Right lobe of liver (tissue), 6 donors: ENCODE measurements at regions of chr10 and their contacts with region 1.

Region 1: DNA sequence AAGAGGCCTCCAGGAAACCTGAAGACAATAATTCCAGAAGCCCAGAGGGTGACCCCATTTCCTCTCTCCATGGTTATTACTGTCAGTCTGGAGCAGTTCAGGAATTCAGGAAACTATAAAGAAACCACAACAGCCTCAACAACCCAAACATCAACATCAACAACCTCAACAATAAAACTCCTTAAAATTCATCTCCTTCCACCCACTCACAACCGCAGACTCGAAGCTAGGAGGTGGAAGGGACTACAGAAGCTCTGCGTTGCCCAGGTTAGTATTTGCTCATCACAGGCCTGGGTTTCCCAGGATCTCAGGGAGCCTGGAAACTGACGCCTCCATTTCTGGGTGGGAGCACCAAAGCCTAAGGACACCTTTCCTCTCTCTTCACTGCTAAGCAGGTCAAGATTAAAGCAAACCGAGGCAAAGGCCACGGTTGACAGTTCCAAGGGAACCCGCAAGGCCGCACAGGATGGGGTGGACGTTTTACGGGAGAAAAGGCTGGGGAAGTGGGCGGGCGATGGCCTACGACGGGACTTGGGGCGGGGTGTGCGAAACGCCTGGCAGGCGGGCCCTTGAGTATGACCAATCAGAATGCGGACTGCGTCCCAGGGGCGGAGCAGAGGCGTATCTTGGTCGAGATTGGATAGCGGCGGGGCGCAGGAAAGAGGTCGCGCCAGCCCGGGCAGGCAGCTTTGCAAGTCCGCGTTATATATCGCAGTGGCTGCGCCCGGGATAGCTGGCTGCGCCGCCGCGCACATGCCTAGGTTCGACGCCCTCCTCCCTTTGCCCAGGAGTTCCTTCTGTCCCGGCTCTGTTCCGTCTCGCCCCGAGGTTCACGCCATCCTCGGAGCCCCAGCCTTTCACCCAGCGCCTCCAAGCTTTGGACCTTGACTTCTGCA is at the start of gene ELOVL3:
- DNase-seq: peak; percentile 90 to 92 (median 91)
- ATAC-seq: peak; percentile 91 to 96 (median 94)
- H3K4me3 ChIP-seq: peak within 1 kb of the TSS in 2 of 3 donors; percentile 14 to 39
- H3K27ac ChIP-seq: peak within 1 kb of the TSS in 2 of 3 donors; percentile 24 to 48
- H3K4me1 ChIP-seq: peaks cover 0 to 10% (median 5%) of the 10 kb centered on the region in 4 donors
- H3K27me3 ChIP-seq: peaks cover 0 to 8% of the 10 kb centered on the region in 2 donors
- CTCF ChIP-seq: no peak
- POLR2A ChIP-seq: no peak
- total RNA-seq, gene ELOVL3: not detected

Region 2: DNA sequence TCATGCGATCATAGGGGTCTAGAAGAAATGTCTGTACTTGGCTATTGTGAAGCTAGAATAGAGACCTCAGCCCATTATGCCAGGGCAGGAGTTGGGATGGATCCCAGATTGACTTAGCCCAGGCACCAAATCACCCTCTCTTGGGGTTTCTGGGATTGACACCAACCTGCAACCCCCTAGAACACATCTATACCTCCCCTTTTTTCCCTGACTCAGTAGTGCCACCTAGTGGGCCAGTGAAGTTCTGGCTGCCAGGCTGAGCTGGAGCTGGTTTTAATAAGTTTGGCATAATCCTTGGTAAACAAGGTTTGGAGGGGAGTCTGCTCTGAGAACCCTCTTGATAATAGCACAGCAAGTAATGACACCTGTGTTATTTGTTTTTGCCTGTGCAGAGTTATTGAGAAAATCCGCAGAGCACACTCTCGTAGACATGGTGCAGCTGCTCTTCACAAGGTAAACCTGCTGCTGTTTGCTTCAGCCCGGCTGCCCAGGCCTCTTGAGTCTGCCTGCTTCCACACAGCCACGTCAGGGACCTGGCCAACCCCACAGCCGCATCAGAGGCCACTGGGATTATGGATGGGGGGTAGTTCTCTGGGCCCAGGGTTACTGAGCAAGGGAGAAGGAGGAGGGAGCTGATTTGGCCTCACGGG is 126.3 kb after region 1 on chr10:
- intact Hi-C with region 1: loop called in 1 of 2 experiments (anchors 5 kb)
- DNase-seq: peak in 2 of 3 donors; percentile 47 to 53
- ATAC-seq: peak; percentile 69 to 77 (median 74)
- H3K4me3 ChIP-seq: no peak overlapping the region
- H3K27ac ChIP-seq: no peak overlapping the region
- H3K4me1 ChIP-seq: no peaks in the 10 kb centered on the region
- H3K27me3 ChIP-seq: no peaks in the 10 kb centered on the region
- CTCF ChIP-seq: peak; percentile 80 to 91 (median 88)
- POLR2A ChIP-seq: no peak

Region 3: DNA sequence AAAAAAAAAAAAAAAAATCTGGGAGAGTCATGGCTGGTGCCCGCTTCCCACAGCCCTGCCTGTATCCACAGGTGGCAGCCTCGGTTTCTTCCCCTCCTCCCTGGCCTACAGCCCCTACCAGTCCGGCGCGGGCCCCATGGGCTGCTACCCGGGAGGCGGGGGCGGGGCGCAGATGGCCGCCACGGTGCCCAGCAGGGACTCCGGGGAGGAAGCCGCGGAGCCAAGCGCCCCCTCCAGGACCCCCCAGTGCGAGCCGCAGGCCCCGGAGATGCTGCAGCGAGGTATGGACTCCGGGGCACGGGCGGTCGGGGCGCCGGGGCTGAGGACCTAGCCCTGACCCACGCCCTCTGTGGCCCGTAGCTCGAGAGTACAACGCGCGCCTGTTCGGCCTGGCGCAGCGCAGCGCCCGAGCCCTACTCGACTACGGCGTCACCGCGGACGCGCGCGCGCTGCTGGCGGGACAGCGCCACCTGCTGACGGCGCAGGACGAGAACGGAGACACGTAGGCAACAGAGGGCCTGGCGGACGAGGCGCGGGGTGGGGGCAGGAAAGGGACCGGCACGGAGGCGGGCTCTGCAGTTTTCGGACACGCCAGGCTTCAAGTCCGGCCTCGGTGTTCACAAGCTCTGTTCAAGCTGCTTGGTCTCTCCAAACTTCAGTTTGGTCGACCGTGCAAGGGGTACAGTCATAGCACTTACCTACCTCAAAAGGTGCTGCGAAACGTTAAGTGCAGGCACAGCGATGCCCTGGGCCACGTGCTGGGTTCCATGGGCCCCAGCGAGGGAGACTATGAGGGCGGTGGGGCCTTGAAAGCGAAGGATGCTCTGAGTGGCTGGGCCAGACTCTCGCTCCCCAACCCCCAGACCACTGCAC is 173.6 kb after region 1 on chr10:
- intact Hi-C with region 1: loop called in 1 of 2 experiments (anchors 5 kb)
- DNase-seq: peak; percentile 91 to 93 (median 92)
- ATAC-seq: peak; percentile 71 to 85 (median 79)
- H3K4me3 ChIP-seq: peak overlapping the region; percentile 47 to 65 (median 60)
- H3K27ac ChIP-seq: peak overlapping the region; percentile 68 to 83 (median 81)
- H3K4me1 ChIP-seq: peaks cover 0 to 10% (median 0%) of the 10 kb centered on the region in 4 donors
- H3K27me3 ChIP-seq: no peaks in the 10 kb centered on the region
- CTCF ChIP-seq: peak; percentile 94 to 99 (median 96)
- POLR2A ChIP-seq: peak; percentile 43

Region 4: DNA sequence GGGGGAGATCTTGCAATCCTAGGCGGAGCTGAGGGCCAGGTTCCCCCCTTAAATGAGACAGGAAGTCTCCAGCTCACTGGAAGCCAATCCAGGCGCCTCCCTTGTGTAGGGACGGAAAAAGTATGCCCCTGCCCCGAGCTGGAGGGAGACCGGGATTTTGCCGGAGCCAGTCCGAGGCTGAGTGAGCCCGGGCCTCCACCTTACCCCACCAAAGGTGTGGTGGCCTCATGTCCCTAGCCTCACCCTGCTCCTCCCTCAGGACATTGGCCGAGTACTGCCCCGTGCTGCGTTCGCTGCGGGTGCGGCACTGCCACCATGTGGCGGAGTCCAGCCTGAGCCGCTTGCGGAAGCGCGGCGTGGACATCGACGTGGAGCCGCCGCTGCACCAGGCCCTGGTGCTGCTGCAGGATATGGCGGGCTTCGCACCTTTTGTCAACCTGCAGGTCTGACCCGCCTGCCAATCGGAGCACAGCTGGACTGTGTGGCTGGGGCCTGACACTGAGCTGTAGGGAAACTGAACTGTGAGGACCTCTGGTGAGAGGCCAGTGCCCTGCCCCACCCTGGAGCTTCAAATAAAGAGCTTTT is 196.7 kb after region 1 on chr10:
- intact Hi-C with region 1: no loop called
- DNase-seq: peak; percentile 88 to 90 (median 89)
- ATAC-seq: peak; percentile 71 to 78 (median 74)
- H3K4me3 ChIP-seq: peak overlapping the region; percentile 86 to 90 (median 89)
- H3K27ac ChIP-seq: peak overlapping the region; percentile 71 to 89 (median 73)
- H3K4me1 ChIP-seq: peaks cover 0 to 25% (median 11%) of the 10 kb centered on the region in 4 donors
- H3K27me3 ChIP-seq: no peaks in the 10 kb centered on the region
- CTCF ChIP-seq: peak; percentile 82 to 92 (median 88)
- POLR2A ChIP-seq: peak; percentile 11